Prostate gland (tissue), 2 donors: ENCODE measurements at regions of chr6 and their contacts with region 1.

Region 1: DNA sequence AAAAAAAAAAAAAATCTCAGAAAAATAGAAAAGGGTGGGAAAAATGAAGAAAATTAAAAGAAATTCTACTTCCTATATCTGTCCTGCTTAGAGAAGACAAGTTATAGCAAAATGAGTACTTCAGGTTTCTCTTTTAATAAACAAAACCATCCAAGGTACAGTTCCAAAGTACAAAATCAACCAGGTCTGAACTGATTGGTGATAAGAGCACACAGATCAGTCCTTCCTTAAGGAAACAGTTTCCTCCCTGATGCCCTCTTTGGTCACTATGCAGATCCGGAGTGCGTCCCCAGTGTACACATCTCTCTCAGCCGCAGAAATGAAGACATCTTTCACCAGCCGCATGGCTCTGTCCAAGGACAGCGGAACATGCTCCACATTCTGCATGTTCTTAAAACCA is 18.1 kb downstream of the PSMB1 start:
- DNase-seq: no peak
- H3K4me3 ChIP-seq: no peak overlapping the region
- H3K27ac ChIP-seq: no peak overlapping the region
- H3K4me1 ChIP-seq: no peaks in the 10 kb centered on the region
- H3K27me3 ChIP-seq: no peaks in the 10 kb centered on the region
- CTCF ChIP-seq: no peak
- POLR2A ChIP-seq: no peak

Region 2: DNA sequence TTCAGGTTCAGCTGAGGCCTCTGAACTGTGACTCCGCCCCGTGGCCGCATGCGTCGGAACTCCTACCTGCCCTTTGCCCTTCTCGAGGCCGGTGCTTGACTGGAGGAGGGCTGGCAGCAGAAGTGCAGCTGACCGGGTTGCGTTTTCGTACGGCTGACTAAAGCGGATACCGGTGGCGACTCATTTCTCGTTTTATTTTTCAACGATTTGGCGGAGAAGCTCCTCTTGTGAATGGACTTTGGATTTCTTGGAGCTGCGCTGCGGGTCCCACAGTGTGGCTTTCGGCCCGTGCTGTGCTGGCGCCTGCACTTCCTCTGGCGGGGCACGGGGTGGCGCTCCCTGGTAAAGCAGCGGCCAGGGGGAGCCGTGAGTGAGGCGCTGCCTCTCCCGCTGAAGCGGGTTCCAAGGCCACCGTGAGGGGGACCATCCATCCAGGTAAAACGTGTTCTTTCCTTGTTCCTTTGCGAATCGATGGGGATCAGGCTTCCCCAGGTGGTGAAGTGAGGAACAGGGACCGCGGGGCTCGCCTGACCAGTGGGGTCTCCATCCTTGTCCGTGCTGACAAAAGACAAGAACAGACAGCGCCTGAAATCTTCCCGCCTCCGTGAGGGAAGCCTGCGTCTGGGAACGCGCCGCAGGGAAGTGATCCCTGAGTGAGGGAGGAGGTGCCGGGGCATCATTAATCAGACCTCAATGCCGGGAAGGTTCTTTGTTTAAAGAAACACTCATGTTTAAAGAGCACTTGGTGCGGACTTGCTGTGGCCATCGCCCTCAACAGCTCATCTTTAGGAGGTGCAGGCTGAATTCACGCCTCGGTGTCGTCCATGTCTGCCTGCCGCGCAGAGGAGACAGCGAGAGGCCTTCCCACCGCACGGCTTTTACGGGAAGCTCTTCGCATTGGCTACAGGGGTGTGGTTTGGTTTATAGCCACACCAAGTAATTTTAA is 744.7 kb before region 1 on chr6:
- intact Hi-C with region 1: loop called (anchors 5 kb)
- DNase-seq: peak; percentile 61
- H3K4me3 ChIP-seq: peak overlapping the region; percentile 24 to 25
- H3K27ac ChIP-seq: peak overlapping the region; percentile 65 to 83
- H3K4me1 ChIP-seq: peaks cover 4% of the 10 kb centered on the region
- H3K27me3 ChIP-seq: no peaks in the 10 kb centered on the region
- CTCF ChIP-seq: peak; percentile 81 to 98 (median 92)
- POLR2A ChIP-seq: no peak